Psoas muscle (tissue), 8 donors: ENCODE measurements at regions of chr1 and their contacts with region 1.

Region 1: GRCh38 chr1:25198663-25199252 is 33.5 kb downstream of the SYF2 start:
- DNase-seq: no peak
- ATAC-seq: peak; percentile 58 to 81 (median 72)
- H3K4me3 ChIP-seq: peak overlapping the region; percentile 37
- H3K27ac ChIP-seq: no peak overlapping the region
- H3K4me1 ChIP-seq: peaks cover 22% of the 10 kb centered on the region
- H3K27me3 ChIP-seq: peaks cover 0 to 1% (median 0%) of the 10 kb centered on the region in 3 donors
- CTCF ChIP-seq: no peak

Region 2: GRCh38 chr1:24932284-24932683 is 266.5 kb before region 1 on chr1:
- intact Hi-C with region 1: loop called in 1 of 2 experiments (anchors 10 kb)
- DNase-seq: peak in 1 of 2 donors; percentile 50
- ATAC-seq: peak; percentile 57 to 81 (median 72)
- H3K4me3 ChIP-seq: peak overlapping the region; percentile 35
- H3K27ac ChIP-seq: no peak overlapping the region
- H3K4me1 ChIP-seq: peaks cover 10% of the 10 kb centered on the region
- H3K27me3 ChIP-seq: peaks cover 4 to 76% (median 42%) of the 10 kb centered on the region in 3 donors
- CTCF ChIP-seq: peak; percentile 77

Region 3: DNA sequence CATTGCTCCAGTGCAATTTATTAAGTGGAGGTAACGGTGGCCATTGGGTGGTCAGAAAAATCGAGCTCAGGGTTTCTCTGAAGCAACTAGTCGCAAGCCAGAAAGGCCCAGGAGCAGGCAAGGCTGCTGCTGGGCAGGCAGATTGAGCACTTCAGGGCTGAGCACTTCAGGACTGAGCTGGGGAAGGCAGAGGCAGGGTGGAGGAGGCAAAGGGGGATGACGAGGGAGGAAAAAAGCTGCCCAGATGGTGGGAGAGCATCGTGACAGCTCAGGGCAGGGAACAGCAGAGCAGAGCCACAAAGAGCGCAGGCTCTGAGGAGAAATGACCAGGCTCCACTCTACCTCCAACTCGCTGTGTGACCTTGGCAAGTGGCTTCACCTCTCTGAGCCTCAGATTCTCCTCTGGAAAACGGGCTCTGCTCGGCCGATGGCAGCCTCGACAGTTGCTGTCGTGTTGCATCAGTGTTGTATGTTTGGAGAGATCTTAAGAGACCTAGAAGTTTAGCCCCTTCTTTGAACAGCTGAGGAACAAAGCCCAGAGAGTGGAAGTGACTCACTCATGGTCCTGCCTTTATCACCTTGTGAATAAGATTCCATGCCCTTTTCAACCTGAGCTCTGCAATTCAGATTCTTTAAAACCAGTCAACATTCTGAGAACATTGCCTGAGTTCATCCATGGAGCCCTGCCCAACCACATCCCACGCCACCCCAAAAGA is 107.9 kb before region 1 on chr1:
- intact Hi-C with region 1: no loop called
- DNase-seq: no peak
- ATAC-seq: no peak
- H3K4me3 ChIP-seq: no peak overlapping the region
- H3K27ac ChIP-seq: no peak overlapping the region
- H3K4me1 ChIP-seq: no peaks in the 10 kb centered on the region
- H3K27me3 ChIP-seq: no peaks in the 10 kb centered on the region
- CTCF ChIP-seq: no peak